Dorsolateral prefrontal cortex (tissue), 120 donors: ENCODE measurements at regions of chr16 and their contacts with region 1.

Region 1: DNA sequence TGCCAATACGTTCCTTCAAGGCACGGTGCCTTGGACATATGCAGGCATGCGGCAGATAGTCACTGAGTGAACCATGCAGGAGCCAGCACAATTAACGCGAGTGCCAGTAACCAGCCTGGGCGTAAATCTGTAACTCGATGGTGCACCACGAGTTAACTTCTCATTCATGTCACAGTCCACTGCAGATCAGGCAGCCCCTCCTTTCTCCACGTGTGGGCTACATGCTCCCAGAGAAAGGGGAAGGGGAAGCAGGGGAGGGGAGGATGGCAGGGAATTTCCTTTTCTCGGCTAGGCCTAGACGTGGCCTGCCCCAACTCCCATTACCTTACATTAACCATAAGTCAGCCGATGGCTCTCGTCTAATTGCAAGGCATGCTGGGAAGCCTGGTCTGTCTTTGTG is 287.9 kb downstream of the CPPED1 start:
- DNase-seq: peak in 1 of 10 donors; percentile 38
- H3K4me3 ChIP-seq: no peak overlapping the region
- H3K27ac ChIP-seq: peak overlapping the region in 5 of 59 donors; percentile 6 to 39 (median 31)
- H3K27me3 ChIP-seq: no peaks in the 10 kb centered on the region
- CTCF ChIP-seq: no peak

Region 2: DNA sequence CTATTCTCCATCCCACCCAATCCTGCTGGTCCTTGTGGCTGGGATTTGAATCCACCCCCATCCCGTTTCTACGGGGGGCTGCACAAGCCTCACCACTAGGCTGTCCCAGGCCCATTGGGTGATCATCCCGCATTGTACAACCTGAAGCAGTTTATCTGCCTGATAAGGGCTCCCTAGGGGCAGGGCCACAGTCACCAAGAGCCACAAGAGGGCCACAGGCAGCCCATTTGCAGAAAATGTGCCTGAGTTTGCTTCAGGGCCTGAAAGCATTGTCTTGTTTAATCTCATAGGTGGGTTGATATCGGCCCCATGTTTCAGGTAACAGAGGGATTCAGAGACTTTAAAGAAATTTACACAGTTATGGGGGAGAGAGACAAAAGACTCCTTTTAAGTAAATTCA is 42.9 kb after region 1 on chr16:
- intact Hi-C with region 1: loop called in 1 of 2 experiments (anchors 5 kb)
- DNase-seq: peak in 1 of 10 donors; percentile 32
- H3K4me3 ChIP-seq: no peak overlapping the region
- H3K27ac ChIP-seq: peak overlapping the region in 32 of 59 donors; percentile 1 to 89 (median 66)
- H3K27me3 ChIP-seq: no peaks in the 10 kb centered on the region
- CTCF ChIP-seq: peak in 16 of 56 donors; percentile 13 to 38 (median 25)